Caco-2 (cell line): ENCODE measurements at regions of chr5 and their contacts with region 1.

Region 1: DNA sequence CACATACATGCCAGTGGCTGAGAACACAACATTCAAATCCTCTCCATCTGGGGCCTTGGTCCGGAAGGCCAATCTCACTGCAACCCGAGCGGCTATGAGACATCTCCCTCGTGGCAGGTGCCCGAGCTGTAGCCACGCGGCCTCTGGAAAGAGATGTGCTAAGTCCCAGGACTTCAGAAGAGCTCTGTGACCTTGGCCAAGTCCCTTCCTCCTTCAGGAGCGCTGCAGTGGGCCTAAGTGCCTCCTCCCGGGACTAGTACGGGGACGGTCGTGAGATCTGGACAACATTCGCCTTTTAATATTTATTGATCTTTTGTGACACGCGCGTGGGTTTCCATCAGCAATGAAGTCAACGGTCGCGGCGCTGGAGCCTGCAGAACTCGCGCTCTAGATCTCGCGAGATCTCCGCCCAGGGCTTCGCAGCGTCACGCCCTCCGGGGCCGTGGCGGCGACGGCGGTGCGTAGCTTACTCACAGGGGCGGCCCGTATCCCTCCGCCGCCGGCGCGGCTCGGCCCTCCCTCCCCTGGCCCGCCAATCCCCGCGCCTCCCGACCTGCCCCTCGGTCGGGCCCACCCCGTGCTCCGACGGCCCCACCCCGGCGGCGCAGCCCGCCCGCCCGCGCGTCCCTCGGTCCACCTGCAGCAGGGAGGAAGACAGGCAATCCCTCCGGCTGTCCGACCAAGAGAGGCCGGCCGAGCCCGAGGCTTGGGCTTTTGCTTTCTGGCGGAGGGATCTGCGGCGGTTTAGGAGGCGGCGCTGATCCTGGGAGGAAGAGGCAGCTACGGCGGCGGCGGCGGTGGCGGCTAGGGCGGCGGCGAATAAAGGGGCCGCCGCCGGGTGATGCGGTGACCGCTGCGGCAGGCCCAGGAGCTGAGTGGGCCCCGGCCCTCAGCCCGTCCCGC is at the start of gene UBE2D2:
- DNase-seq: peak; percentile 97 to 98
- H3K4me3 ChIP-seq: peak within 1 kb of the TSS; percentile 79
- H3K4me3 Mint-ChIP-seq: peak within 1 kb of the TSS; percentile 93
- H3K27ac Mint-ChIP-seq: peak within 1 kb of the TSS; percentile 92
- H3K4me1 ChIP-seq: 0 out of 2 replicates have a peak, but pooled peaks cover 13% of the 10 kb centered on the region
- H3K4me1 Mint-ChIP-seq: peaks cover 7% of the 10 kb centered on the region
- H3K27me3 ChIP-seq: no peaks in the 10 kb centered on the region
- H3K27me3 Mint-ChIP-seq: no peaks in the 10 kb centered on the region
- CTCF ChIP-seq: no peak
- total RNA-seq, gene UBE2D2: 192 and 193 TPM in 2 replicates

Region 2: DNA sequence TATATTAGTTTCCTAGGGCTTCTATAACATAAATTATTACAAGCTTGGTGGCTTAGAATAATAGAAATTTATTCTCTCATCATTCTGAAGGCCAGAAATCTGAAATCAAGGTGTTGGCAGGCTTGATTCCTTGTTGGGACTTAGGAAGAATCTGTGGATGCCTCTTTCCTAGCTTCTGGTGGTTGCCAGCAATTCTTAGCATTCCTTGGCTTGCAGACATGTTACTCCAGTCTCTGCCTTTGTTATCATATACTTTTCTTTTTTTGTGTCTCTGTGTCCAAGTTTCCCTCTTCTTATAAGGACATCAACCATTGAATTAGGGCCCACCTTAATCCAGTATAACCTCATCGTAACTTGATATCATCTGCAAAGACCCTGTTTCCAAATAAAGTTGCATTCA is 776.4 kb before region 1 on chr5:
- CTCF ChIA-PET with region 1: no interaction called
- POLR2A ChIA-PET with region 1: no interaction called
- intact Hi-C with region 1: no loop called
- DNase-seq: no peak
- H3K4me3 ChIP-seq: no peak overlapping the region
- H3K4me3 Mint-ChIP-seq: no peak overlapping the region
- H3K27ac Mint-ChIP-seq: no peak overlapping the region
- H3K4me1 ChIP-seq: peaks cover 25% of the 10 kb centered on the region
- H3K4me1 Mint-ChIP-seq: peaks cover 24% of the 10 kb centered on the region
- H3K27me3 ChIP-seq: no peaks in the 10 kb centered on the region
- H3K27me3 Mint-ChIP-seq: no peaks in the 10 kb centered on the region
- CTCF ChIP-seq: no peak

Region 3: DNA sequence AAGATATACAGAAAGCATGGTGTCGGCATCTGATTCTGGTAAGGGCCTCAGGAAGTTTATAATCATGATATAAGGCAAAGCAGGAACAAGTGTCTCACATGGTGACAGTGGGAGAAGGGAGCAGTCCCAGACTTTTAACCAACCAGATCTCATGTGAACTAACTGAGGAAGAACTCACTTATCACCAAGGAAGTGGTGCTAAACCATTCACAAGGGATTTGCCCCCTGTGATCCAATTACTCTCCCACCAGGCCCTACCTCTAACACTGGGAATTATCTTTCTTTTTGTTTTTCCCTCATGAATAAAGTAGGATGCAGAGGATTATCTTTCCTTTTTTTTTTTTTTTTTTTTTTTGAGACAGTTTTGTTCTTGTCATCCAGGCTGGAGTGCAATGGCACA is 562.5 kb before region 1 on chr5:
- CTCF ChIA-PET with region 1: interaction called, 12 read pairs
- POLR2A ChIA-PET with region 1: no interaction called
- intact Hi-C with region 1: no loop called
- DNase-seq: no peak
- H3K4me3 ChIP-seq: no peak overlapping the region
- H3K4me3 Mint-ChIP-seq: no peak overlapping the region
- H3K27ac Mint-ChIP-seq: no peak overlapping the region
- H3K4me1 ChIP-seq: no peaks in the 10 kb centered on the region
- H3K4me1 Mint-ChIP-seq: no peaks in the 10 kb centered on the region
- H3K27me3 ChIP-seq: no peaks in the 10 kb centered on the region
- H3K27me3 Mint-ChIP-seq: no peaks in the 10 kb centered on the region
- CTCF ChIP-seq: no peak

Region 4: DNA sequence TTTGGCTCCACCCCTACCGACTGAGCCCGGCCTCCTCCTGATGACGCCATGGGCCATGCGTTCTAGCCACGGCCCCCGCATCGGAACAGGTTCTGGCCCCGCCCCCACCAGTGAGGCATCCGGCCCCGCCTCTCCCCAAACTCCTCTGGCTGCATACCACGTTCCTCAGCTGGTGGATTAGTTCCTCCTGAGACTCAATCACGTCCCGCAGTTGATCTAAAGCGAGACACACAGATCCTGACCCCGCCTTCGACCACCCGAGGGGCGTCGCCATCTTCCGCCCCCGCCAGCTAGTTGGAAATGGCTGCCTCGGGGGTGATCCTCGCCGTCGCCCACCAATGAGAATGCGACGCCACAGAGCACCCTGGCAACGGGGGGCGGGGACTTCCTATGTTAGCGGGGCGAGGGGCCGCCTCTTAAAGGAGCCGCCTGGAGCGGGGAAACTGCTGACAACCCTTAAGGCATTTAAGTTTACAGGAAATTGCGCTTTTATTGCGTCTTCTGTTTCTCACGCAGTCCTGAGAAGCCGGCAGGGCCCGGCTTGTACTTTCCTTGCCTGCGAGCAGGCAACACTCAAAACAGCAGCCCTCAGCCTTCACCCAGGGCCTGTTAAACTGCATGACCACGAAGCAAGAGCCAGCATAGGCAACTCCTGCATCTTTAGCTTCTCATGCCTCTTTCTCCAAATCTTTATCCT is 157.1 kb before region 1 on chr5 and contains the start of gene SPATA24:
- CTCF ChIA-PET with region 1: no interaction called
- POLR2A ChIA-PET with region 1: no interaction called
- intact Hi-C with region 1: loop called (anchors 1 kb)
- DNase-seq: peak; percentile 97
- H3K4me3 ChIP-seq: peak within 1 kb of the TSS; percentile 57
- H3K4me3 Mint-ChIP-seq: peak within 1 kb of the TSS; percentile 90
- H3K27ac Mint-ChIP-seq: peak within 1 kb of the TSS; percentile 97
- H3K4me1 ChIP-seq: 0 out of 2 replicates have a peak, but pooled peaks cover 4% of the 10 kb centered on the region
- H3K4me1 Mint-ChIP-seq: peaks cover 13% of the 10 kb centered on the region
- H3K27me3 ChIP-seq: no peaks in the 10 kb centered on the region
- H3K27me3 Mint-ChIP-seq: no peaks in the 10 kb centered on the region
- CTCF ChIP-seq: no peak
- total RNA-seq, gene SPATA24: 10.1 and 10.2 TPM in 2 replicates

Region 5: GRCh38 chr5:139422307-139422893 is 138.6 kb before region 1 on chr5:
- CTCF ChIA-PET with region 1: no interaction called
- POLR2A ChIA-PET with region 1: no interaction called
- intact Hi-C with region 1: no loop called
- DNase-seq: peak; percentile 47 to 72
- H3K4me3 ChIP-seq: no peak overlapping the region
- H3K4me3 Mint-ChIP-seq: no peak overlapping the region
- H3K27ac Mint-ChIP-seq: no peak overlapping the region
- H3K4me1 ChIP-seq: no peaks in the 10 kb centered on the region
- H3K4me1 Mint-ChIP-seq: peaks cover 6% of the 10 kb centered on the region
- H3K27me3 ChIP-seq: no peaks in the 10 kb centered on the region
- H3K27me3 Mint-ChIP-seq: no peaks in the 10 kb centered on the region
- CTCF ChIP-seq: peak; percentile 77 to 89

Region 6: GRCh38 chr5:139439013-139439903 is 121.7 kb before region 1 on chr5 and contains the start of gene DNAJC18:
- CTCF ChIA-PET with region 1: no interaction called
- POLR2A ChIA-PET with region 1: interaction called, 3 read pairs
- intact Hi-C with region 1: loop called (anchors 5 kb)
- DNase-seq: peak; percentile 94
- H3K4me3 ChIP-seq: peak within 1 kb of the TSS; percentile 94
- H3K4me3 Mint-ChIP-seq: peak within 1 kb of the TSS; percentile 99
- H3K27ac Mint-ChIP-seq: peak within 1 kb of the TSS; percentile 96
- H3K4me1 ChIP-seq: peaks cover 22% of the 10 kb centered on the region
- H3K4me1 Mint-ChIP-seq: peaks cover 21% of the 10 kb centered on the region
- H3K27me3 ChIP-seq: no peaks in the 10 kb centered on the region
- H3K27me3 Mint-ChIP-seq: no peaks in the 10 kb centered on the region
- CTCF ChIP-seq: no peak
- total RNA-seq, gene DNAJC18: 12.5 and 14.1 TPM in 2 replicates

Region 7: GRCh38 chr5:139517683-139518564 is 43.1 kb before region 1 on chr5:
- CTCF ChIA-PET with region 1: no interaction called
- POLR2A ChIA-PET with region 1: interaction called, 3 read pairs
- intact Hi-C with region 1: loop called (anchors 1 kb)
- DNase-seq: peak; percentile 86 to 95
- H3K4me3 ChIP-seq: peak overlapping the region; percentile 52
- H3K4me3 Mint-ChIP-seq: peak overlapping the region; percentile 79
- H3K27ac Mint-ChIP-seq: peak overlapping the region; percentile 82
- H3K4me1 ChIP-seq: peaks cover 4% of the 10 kb centered on the region; the same call in 1 of the 2 replicates
- H3K4me1 Mint-ChIP-seq: peaks cover 10% of the 10 kb centered on the region
- H3K27me3 ChIP-seq: no peaks in the 10 kb centered on the region
- H3K27me3 Mint-ChIP-seq: no peaks in the 10 kb centered on the region
- CTCF ChIP-seq: peak; percentile 89 to 96

Region 8: DNA sequence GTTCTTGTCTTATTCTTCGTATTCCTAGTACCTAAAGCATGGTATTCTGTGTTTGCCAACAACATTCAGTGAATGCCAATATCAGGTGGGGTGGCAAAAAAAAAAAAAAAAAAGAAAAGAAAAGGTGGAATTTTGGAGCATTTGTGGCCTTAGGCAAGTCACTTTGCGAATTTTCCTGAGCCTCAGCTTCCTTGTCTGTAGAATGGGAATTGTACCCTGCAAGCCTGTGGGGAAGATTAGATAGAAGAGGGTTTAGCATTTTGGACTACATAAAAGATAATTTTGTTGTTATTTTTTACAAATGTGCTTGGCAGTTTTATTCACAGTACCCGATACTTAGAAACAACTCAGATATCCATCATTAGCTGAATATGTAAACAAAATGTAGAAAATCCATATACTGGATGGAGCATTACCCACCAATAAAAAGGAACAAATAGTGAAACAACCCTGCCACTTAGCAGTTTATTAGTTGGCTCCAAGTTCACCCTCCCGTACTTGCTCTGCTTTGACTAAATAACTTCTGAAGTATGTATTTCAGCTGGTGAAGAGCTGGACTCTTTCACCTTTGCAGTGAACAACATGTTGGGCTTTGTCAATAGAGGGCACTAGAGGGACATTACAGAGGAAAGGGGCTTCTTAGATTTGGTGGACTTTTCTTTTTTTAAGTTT is 13.8 kb after region 1 on chr5:
- CTCF ChIA-PET with region 1: interaction called, 13 read pairs
- POLR2A ChIA-PET with region 1: interaction called, 4 read pairs
- intact Hi-C with region 1: no loop called
- DNase-seq: peak in 1 of 2 experiments; percentile 46
- H3K4me3 ChIP-seq: no peak overlapping the region
- H3K4me3 Mint-ChIP-seq: no peak overlapping the region
- H3K27ac Mint-ChIP-seq: no peak overlapping the region
- H3K4me1 ChIP-seq: 0 out of 2 replicates have a peak, but pooled peaks cover 3% of the 10 kb centered on the region
- H3K4me1 Mint-ChIP-seq: peaks cover 14% of the 10 kb centered on the region
- H3K27me3 ChIP-seq: no peaks in the 10 kb centered on the region
- H3K27me3 Mint-ChIP-seq: no peaks in the 10 kb centered on the region
- CTCF ChIP-seq: peak; percentile 27 to 77